Head of caudate nucleus (tissue), 42 donors: ENCODE measurements at regions of chr3 and their contacts with region 1.

Region 1: GRCh38 chr3:125594581-125595011 is 701 bp downstream of the OSBPL11 start:
- DNase-seq: peak in 23 of 42 donors; percentile 13 to 57 (median 21)

Region 2: DNA sequence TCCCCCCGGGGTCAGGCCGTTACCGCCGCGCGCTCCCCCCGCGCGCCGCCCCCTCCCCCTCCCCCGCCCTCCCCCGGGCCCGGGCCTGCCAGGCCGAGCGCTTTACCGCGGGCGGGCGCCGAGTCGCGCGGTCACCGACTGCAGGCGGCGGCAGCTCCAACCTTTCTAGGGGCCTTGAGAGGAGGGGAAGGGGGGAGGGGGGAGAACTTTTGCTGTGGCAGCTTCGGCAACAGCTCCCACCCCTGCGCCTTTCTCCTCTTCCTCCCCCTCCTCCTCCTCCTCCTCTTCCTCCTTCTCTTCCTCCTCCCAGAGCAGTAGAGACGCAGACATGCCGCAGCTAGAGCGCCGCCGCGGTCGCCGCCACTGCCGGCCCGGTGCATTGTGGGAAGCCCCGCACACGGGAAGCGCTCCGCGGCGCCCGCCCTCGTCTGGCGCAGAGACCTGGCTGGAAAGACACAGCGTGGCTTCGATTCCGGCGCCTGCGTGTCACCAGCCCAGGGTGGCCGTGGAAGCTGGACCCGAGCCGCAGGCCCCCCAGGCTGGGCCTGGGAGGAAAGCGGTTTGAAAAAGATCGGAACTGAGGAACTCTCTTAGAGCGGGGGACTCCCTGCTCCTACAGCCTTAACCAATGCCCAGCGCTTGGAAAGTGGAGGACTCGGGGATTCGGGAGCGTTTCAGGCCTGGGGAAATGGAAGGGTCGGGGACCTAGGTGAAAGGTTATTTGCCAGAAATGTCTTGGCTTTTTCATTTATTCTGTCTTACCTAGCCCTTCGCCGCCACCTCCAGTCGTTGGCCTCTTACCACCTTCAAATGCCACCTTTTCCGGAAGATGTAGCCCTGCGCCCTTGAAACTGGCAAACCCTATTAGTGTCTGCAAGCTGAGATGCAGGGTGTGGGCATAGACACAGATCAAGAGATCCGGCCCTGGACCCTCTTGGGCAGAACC is 219.3 kb before region 1 on chr3 and contains the start of gene ZNF148:
- intact Hi-C with region 1: loop called (anchors 5 kb)
- DNase-seq: peak; percentile 73 to 97 (median 93)

Region 3: DNA sequence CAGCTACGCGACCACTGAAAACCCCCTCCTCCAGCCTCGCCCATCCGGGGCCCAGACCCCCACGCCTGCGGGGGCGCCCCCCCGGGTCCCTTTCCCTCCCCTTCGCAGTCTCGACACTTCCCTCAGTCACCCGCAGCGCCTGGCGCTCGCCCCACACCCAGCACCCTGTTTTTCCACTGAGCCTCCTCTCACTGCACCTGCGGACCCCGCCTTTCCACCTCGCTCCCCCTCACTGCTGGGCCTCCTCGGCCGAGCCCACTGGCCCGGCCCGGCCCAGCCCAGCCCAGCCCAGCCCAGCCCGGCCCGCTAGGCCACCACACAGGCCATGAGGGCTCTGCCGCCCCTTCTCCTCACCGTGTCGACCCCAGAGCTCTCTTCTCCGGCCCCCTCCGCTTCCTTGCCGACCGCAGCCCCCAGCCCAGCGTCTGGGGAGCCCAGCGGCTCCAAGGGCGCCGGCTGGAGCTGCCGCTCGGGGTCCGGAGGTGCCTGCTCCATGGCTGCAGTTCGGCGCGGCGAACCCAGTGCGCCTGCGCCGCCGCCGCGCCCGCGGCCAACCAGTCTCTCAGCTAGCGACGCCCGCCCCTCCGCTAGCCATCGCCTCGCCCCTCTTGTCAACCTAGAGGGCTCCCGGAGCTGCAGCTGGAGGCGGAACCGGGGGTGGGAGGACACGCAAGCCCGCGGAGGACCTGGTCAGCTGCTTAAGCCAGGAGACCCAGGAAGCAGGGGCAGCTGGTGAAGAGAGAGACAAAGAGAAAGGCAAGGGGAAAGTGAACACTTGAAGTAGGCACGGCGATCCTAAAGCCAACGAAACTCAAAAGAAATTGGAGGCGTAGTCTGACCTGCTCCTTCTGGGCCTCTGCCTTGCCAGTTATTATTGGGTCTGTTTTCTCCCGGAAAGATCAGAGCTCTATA is 74.7 kb before region 1 on chr3 and contains the start of gene SNX4:
- intact Hi-C with region 1: loop called (anchors 10 kb)
- DNase-seq: peak; percentile 79 to 97 (median 92)